ENCODE measurements at regions of chr5 and their contacts with region 1.

Region 1: DNA sequence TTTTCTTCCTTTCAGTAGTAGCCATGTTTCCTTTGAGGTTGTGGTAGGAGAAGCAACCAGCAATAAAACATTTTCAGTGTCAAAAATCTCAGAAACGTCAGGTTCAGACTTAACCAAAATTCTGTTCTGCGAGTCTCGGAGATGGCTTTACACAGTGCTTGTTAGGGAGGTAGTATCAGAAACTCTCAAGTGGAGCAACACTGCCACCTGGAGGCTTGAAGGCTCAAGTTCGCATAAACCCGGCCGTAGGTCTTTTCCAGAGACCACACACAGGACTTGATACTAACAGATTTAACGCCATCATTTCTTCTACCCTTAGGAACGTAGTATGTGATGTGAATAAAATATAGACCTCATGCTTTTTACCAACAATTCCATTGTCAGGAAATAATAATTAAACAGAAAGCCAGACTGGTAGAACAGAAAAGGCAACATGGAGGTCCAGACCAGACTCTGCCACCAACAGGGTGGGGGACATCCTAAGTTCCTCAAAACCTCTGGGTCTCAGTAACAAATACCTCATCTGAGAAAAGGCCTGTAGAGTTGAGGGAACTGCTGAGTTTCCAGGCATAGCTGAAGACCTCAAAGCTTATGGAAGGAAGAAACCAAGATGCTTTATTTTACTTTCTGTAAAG is 8.5 kb downstream of the PTGER4 start:
- DNase-seq: peak; percentile 86 to 89
- ATAC-seq: peak; percentile 93
- H3K4me3 ChIP-seq: no peak overlapping the region
- H3K27ac ChIP-seq: no peak overlapping the region
- H3K4me1 ChIP-seq: no peaks in the 10 kb centered on the region
- H3K27me3 ChIP-seq: no peaks in the 10 kb centered on the region

Region 2: GRCh38 chr5:39578887-39579497 is 1109.3 kb before region 1 on chr5:
- intact Hi-C with region 1: loop called (anchors 5 kb)
- DNase-seq: no peak
- ATAC-seq: no peak
- H3K4me3 ChIP-seq: no peak overlapping the region
- H3K27ac ChIP-seq: no peak overlapping the region
- H3K4me1 ChIP-seq: no peaks in the 10 kb centered on the region
- H3K27me3 ChIP-seq: no peaks in the 10 kb centered on the region

Region 3: GRCh38 chr5:39714036-39714698 is 974.1 kb before region 1 on chr5:
- intact Hi-C with region 1: loop called (anchors 2 to 5 kb)
- DNase-seq: no peak
- ATAC-seq: no peak
- H3K4me3 ChIP-seq: no peak overlapping the region
- H3K27ac ChIP-seq: no peak overlapping the region
- H3K4me1 ChIP-seq: no peaks in the 10 kb centered on the region
- H3K27me3 ChIP-seq: no peaks in the 10 kb centered on the region

Region 4: DNA sequence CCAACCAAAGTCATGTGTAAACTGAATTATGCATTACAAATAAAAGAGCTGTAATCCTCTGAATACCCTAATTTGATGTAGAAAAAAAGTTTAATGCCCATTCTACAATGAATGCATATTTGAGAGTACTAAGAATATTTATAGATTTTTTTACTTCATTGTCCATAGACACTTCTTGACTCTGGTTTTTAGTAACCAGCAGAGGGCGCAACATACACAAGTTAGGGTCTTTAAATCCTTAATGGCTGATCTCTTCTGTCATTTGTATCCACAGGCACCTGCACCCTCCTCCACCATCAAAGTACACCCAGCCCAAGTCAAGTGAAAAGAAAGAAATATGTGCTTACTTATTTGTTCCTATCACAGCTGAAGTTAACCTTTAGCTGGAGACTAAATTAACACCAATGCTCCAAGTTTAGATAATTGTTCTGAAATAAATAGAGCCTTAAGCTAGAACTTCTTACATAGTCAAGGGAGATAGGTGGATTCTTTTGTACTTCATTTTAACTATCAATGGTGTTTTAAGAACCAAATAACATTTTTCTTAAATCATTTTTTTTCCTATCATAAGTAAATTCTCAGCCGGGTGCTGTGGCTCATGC is 739.3 kb before region 1 on chr5:
- intact Hi-C with region 1: loop called (anchors 2 to 5 kb)
- DNase-seq: no peak
- ATAC-seq: peak; percentile 68
- H3K4me3 ChIP-seq: no peak overlapping the region
- H3K27ac ChIP-seq: no peak overlapping the region
- H3K4me1 ChIP-seq: no peaks in the 10 kb centered on the region
- H3K27me3 ChIP-seq: no peaks in the 10 kb centered on the region

Region 5: DNA sequence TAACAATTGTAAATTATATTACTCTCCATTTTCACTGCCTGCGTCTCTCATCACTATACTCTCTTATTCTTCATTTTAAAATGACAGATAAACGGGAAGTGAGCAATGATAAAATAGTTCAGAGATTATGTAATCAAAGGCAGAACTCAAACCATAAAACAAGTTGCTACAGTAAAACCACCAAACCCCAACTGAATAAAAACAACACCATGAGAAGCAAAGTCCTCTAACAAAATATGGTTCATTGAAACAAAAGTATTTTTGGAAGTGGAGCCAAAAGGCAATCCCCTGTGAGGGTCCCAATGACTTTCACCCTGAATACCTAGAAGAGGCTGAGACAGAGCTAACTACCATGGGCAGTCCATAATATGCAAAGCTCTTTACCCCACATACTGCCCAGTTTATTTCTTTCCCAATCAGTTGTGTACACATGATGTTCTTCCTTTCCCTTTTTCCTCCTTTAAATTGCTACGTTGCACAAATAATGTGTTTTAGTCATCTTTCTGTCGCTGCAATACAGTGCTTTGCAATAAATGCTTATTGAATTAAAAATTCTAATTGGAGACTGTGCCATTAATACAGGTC is 72.6 kb before region 1 on chr5:
- intact Hi-C with region 1: no loop called
- DNase-seq: no peak
- ATAC-seq: no peak
- H3K4me3 ChIP-seq: no peak overlapping the region
- H3K27ac ChIP-seq: no peak overlapping the region
- H3K4me1 ChIP-seq: no peaks in the 10 kb centered on the region
- H3K27me3 ChIP-seq: no peaks in the 10 kb centered on the region